ENCODE measurements at regions of chr6 and their contacts with region 1.

Region 1: GRCh38 chr6:85865420-85866369 is 223.0 kb upstream of the SYNCRIP start:
- DNase-seq: no peak

Region 2: GRCh38 chr6:85023721-85024120 is 842.0 kb before region 1 on chr6:
- intact Hi-C with region 1: loop called in 1 of 2 experiments (anchors 5 kb)
- DNase-seq: no peak

Region 3: GRCh38 chr6:85887462-85887861 is 21.8 kb after region 1 on chr6:
- intact Hi-C with region 1: no loop called
- DNase-seq: no peak

Region 4: GRCh38 chr6:86789779-86790411 is 924.2 kb after region 1 on chr6:
- intact Hi-C with region 1: loop called in 1 of 2 experiments (anchors 5 kb)
- DNase-seq: no peak